Mucosa of descending colon (tissue), 3 donors: ENCODE measurements at regions of chr1 and their contacts with region 1.

Region 1: DNA sequence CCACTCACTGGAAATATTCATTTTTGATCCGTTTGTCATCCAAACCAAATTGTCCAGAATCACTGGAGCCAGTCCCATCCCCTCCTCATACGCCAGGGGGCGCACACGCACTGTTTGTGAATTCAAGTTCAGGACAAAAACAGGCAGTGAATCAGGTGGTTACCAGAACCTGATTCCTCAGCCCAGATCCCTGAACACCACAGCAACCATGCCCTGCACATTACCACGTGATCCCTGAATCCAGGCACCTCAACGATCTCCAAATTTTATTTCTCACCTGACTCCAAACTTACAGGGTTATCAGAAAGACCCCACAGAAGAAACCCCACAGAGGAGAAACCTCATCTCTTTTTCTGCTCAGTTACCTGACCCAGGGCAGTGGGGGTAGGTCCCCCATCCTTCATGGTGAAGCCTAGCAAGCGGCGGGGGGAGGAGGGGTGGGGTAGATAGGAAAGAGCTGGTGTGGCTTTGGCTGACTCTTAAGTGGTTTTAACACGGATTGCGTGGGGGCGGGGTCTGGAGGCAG is 1.4 kb upstream of the PTPRF start:
- DNase-seq: peak; percentile 81 to 94 (median 90)
- ATAC-seq: peak; percentile 74
- H3K4me3 ChIP-seq: no peak overlapping the region
- H3K4me1 ChIP-seq: peaks cover 26% of the 10 kb centered on the region
- CTCF ChIP-seq: peak; percentile 88

Region 2: GRCh38 chr1:43481491-43481890 is 47.8 kb before region 1 on chr1:
- intact Hi-C with region 1: no loop called
- DNase-seq: no peak
- ATAC-seq: no peak
- H3K4me3 ChIP-seq: no peak overlapping the region
- H3K4me1 ChIP-seq: peaks cover 4% of the 10 kb centered on the region
- CTCF ChIP-seq: no peak

Region 3: GRCh38 chr1:43650310-43651085 is 121.2 kb after region 1 on chr1:
- intact Hi-C with region 1: loop called (anchors 5 to 10 kb)
- DNase-seq: peak; percentile 94 to 99 (median 95)
- ATAC-seq: peak; percentile 87
- H3K4me3 ChIP-seq: peak overlapping the region; percentile 70
- H3K4me1 ChIP-seq: peaks cover 14% of the 10 kb centered on the region
- CTCF ChIP-seq: no peak